ENCODE measurements at regions of chr12 and their contacts with region 1.

Region 1: DNA sequence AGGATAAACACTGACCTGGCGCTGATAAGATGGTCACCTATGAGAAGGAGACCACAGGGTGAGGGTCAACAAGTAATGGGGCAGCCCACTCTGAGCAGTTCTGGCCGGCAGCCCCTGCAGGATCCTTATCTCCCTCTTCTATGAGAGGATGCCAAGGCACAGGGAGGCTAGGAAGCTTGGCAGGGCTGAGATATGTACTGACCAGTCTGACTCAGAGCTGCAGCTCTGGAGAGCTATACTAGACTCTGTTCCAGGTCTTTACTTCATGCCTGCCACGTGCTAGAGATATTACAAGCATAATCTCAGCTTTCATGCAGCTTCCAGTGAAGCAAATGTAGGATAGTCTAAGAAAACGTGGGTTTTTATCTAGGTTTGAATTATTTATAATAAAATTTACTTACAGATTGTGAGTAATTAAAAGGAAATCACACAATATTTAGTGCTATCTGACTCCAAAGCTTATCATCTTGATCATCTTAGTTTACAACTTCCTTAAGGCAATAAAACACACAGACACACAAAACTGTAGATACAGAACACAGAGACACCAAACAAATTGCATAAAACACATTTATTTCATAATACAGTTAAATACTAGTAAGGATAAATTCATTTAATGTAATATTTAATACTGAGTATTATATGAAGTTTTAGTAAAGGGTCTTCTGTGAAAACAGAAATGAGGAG is 32.3 kb downstream of the GIT2 start:
- DNase-seq: no peak
- H3K4me3 ChIP-seq: no peak overlapping the region
- CTCF ChIP-seq: no peak

Region 2: GRCh38 chr12:109879403-109880015 is 84.4 kb before region 1 on chr12:
- in situ Hi-C with region 1: loop called (anchors 10 kb)
- DNase-seq: no peak
- H3K4me3 ChIP-seq: peak overlapping the region; percentile 85
- CTCF ChIP-seq: no peak

Region 3: GRCh38 chr12:109995686-109996482 is 32.0 kb after region 1 on chr12 and contains the start of gene GIT2:
- in situ Hi-C with region 1: loop called (anchors 5 kb)
- DNase-seq: peak; percentile 80
- H3K4me3 ChIP-seq: peak within 1 kb of the TSS; percentile 87
- CTCF ChIP-seq: no peak

Region 4: GRCh38 chr12:110033888-110034287 is 70.0 kb after region 1 on chr12:
- in situ Hi-C with region 1: loop called (anchors 5 kb)
- DNase-seq: no peak
- H3K4me3 ChIP-seq: no peak overlapping the region
- CTCF ChIP-seq: no peak